PC-9 (cell line): ENCODE measurements at regions of chr14 and their contacts with region 1.

Region 1: GRCh38 chr14:96100161-96101029 is 61.2 kb downstream of the C14orf132 start:
- DNase-seq: peak; percentile 45 to 47
- H3K4me3 ChIP-seq: no peak overlapping the region
- H3K27ac ChIP-seq: no peak overlapping the region
- H3K4me1 ChIP-seq: peaks cover 52% of the 10 kb centered on the region
- H3K27me3 ChIP-seq: no peaks in the 10 kb centered on the region
- CTCF ChIP-seq: peak; percentile 89

Region 2: GRCh38 chr14:95561001-95561412 is 539.4 kb before region 1 on chr14:
- CTCF ChIA-PET with region 1: no interaction called
- POLR2A ChIA-PET with region 1: no interaction called
- intact Hi-C with region 1: loop called (anchors 5 kb)
- DNase-seq: peak; percentile 67 to 68
- H3K4me3 ChIP-seq: no peak overlapping the region
- H3K27ac ChIP-seq: no peak overlapping the region
- H3K4me1 ChIP-seq: no peaks in the 10 kb centered on the region
- H3K27me3 ChIP-seq: no peaks in the 10 kb centered on the region
- CTCF ChIP-seq: peak; percentile 92

Region 3: GRCh38 chr14:96056509-96057422 is 43.6 kb before region 1 on chr14:
- CTCF ChIA-PET with region 1: interaction called, 9 read pairs
- POLR2A ChIA-PET with region 1: no interaction called
- intact Hi-C with region 1: loop called (anchors 1 kb)
- DNase-seq: peak in 1 of 2 experiments; percentile 2
- H3K4me3 ChIP-seq: no peak overlapping the region
- H3K27ac ChIP-seq: no peak overlapping the region
- H3K4me1 ChIP-seq: 0 out of 2 replicates have a peak, but pooled peaks cover 3% of the 10 kb centered on the region
- H3K27me3 ChIP-seq: peaks cover 16% of the 10 kb centered on the region; the same call in 1 of the 2 replicates
- CTCF ChIP-seq: peak; percentile 68

Region 4: GRCh38 chr14:96077983-96078658 is 22.3 kb before region 1 on chr14:
- CTCF ChIA-PET with region 1: no interaction called
- POLR2A ChIA-PET with region 1: no interaction called
- intact Hi-C with region 1: no loop called
- DNase-seq: no peak
- H3K4me3 ChIP-seq: no peak overlapping the region
- H3K27ac ChIP-seq: no peak overlapping the region
- H3K4me1 ChIP-seq: peaks cover 20% of the 10 kb centered on the region
- H3K27me3 ChIP-seq: no peaks in the 10 kb centered on the region
- CTCF ChIP-seq: no peak

Region 5: DNA sequence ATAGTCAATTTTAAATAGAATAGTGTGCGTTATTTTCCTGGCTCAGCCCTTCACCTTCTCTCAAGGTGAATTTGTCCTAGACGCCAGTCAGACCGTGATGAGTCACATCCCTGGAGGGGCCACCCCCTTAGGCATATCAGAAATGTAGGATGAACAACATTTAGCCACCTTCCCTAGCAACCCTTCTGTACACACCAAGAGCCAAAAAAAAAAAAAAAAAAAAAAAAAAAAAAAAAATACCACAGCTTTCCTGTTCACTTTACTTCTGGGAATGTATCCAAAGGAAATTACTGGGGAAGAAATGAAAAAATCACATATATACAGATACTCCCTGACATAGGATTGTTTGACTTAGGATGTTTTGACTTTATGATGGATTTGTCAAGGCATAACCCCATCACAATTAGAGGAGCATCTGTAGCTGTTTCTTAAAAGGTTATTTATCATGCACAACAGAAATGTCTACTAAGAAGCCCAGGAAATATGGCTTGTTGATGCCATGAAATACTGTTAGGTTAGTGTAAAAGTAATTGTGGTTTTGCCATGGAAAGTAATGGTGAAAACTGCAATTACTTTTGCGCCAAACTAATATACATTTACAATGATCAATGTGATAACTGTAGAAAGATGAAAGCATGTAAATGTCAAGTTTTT is 36.1 kb after region 1 on chr14:
- CTCF ChIA-PET with region 1: interaction called, 15 read pairs
- POLR2A ChIA-PET with region 1: no interaction called
- intact Hi-C with region 1: no loop called
- DNase-seq: peak; percentile 31 to 81
- H3K4me3 ChIP-seq: no peak overlapping the region
- H3K27ac ChIP-seq: 0 out of 2 replicates have a peak overlapping the region, but pooled peaks have one; percentile 76
- H3K4me1 ChIP-seq: peaks cover 24% of the 10 kb centered on the region
- H3K27me3 ChIP-seq: no peaks in the 10 kb centered on the region
- CTCF ChIP-seq: no peak

Region 6: GRCh38 chr14:96204151-96205058 is 104.0 kb after region 1 on chr14 and contains the start of gene BDKRB2:
- CTCF ChIA-PET with region 1: no interaction called
- POLR2A ChIA-PET with region 1: no interaction called
- intact Hi-C with region 1: loop called (anchors 10 kb)
- DNase-seq: peak; percentile 57 to 86
- H3K4me3 ChIP-seq: peak within 1 kb of the TSS; percentile 59
- H3K27ac ChIP-seq: peak within 1 kb of the TSS; percentile 68
- H3K4me1 ChIP-seq: peaks cover 40% of the 10 kb centered on the region
- H3K27me3 ChIP-seq: no peaks in the 10 kb centered on the region
- CTCF ChIP-seq: no peak
- total RNA-seq, gene BDKRB2: 0.28 and 0.43 TPM in 2 replicates

Region 7: GRCh38 chr14:96275177-96276112 is 175.1 kb after region 1 on chr14:
- CTCF ChIA-PET with region 1: no interaction called
- POLR2A ChIA-PET with region 1: no interaction called
- intact Hi-C with region 1: loop called (anchors 1 kb)
- DNase-seq: no peak
- H3K4me3 ChIP-seq: no peak overlapping the region
- H3K27ac ChIP-seq: no peak overlapping the region
- H3K4me1 ChIP-seq: peaks cover 16% of the 10 kb centered on the region
- H3K27me3 ChIP-seq: no peaks in the 10 kb centered on the region
- CTCF ChIP-seq: peak; percentile 92